Gastrocnemius medialis (tissue), 4 donors: ENCODE measurements at regions of chr13 and their contacts with region 1.

Region 1: GRCh38 chr13:24995226-24995804 is 100.6 kb upstream of the PABPC3 start:
- DNase-seq: peak; percentile 16 to 39
- ATAC-seq: peak; percentile 85 to 94
- H3K4me3 ChIP-seq: no peak overlapping the region
- H3K27ac ChIP-seq: no peak overlapping the region
- H3K4me1 ChIP-seq: no peaks in the 10 kb centered on the region
- H3K27me3 ChIP-seq: no peaks in the 10 kb centered on the region
- CTCF ChIP-seq: peak; percentile 25 to 68 (median 51)
- POLR2A ChIP-seq: no peak

Region 2: DNA sequence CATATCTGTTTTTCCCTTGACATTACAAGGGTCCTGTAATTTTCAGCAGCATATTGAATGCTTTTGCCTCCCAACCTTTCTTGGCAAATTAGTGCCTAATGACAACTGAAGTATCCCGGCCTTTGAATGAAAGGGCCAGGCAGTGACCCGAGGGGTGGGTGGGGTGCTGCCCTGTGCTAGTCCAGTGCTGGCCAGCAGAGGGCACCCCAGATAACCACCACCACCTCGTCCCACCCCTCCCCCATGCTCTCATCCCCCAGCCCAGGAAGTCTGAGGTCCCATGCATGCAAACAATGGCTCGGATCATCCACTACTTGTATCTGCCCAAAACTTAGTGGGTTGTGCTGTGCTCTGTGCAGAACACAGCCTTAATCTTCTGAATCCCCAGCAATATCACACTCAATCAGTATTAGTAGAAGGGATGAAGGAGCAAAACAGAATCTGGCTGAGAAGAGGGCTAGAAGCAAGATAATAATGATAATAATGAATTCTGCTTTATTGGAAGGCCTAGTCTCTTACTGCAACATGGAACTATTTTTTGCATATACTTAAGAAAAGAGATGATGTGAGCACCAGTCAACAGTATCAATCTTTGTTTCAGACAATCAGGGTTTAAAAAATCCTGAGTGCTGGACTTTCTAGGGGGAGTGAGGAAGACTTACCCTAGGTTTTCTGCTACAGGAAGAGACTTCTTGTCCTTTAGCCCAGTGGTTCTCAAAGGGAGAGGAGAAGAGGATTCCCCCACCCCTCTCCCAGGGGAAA is 311.3 kb before region 1 on chr13:
- in situ Hi-C with region 1: loop called in 2 of 4 experiments (anchors 25 kb)
- intact Hi-C with region 1: no loop called
- DNase-seq: peak in 1 of 2 donors; percentile 24
- ATAC-seq: peak; percentile 23 to 60
- H3K4me3 ChIP-seq: no peak overlapping the region
- H3K27ac ChIP-seq: no peak overlapping the region
- H3K4me1 ChIP-seq: no peaks in the 10 kb centered on the region
- H3K27me3 ChIP-seq: peaks cover 12 to 22% (median 22%) of the 10 kb centered on the region in 3 donors
- CTCF ChIP-seq: peak; percentile 29 to 72 (median 49)
- POLR2A ChIP-seq: no peak

Region 3: DNA sequence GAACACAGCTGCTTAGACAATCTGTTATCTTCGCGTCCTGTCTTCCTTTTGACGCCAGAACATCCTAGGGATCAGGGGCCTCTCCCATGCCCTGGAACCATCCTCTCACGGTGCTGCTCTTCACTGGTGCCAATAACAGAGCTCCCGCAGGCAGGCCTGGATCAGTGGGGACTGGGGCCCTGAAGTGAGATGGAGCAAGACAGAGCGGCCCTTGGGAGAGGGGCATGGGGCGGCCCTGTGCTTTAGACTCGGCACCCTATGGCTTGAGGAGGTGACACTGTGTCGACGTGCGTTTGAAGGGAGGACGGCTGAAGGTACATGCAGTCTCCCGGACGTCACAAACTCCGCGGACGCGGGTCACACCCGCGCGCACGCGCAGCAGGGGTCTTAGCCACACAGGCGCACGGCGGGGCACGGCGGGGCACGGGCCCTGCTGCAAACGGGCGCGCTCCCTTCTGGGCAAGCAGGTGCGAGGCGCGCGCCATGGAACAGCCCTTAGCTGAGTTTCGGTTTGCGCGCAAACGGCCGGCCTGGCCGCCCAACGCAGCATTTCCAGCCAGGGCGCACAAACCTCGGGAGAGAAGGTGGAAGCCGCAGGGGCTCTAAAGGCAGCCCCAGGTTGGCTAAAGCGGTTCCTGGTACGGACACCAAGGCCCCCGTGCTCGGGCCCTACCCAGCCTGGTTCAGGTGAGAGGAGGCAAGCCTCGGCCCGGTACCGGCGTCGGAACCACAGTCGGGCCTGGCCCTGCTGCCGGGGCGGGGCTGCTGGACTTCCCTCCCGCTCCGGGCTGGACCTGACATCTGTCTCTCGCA is 247.9 kb before region 1 on chr13:
- in situ Hi-C with region 1: no loop called
- intact Hi-C with region 1: no loop called
- DNase-seq: no peak
- ATAC-seq: no peak
- H3K4me3 ChIP-seq: peak overlapping the region; percentile 30 to 44 (median 39)
- H3K27ac ChIP-seq: no peak overlapping the region
- H3K4me1 ChIP-seq: peaks cover 0 to 7% of the 10 kb centered on the region in 2 donors
- H3K27me3 ChIP-seq: peaks cover 18 to 20% (median 20%) of the 10 kb centered on the region in 3 donors
- CTCF ChIP-seq: no peak
- POLR2A ChIP-seq: no peak

Region 4: GRCh38 chr13:25037057-25037813 is 41.9 kb after region 1 on chr13:
- in situ Hi-C with region 1: no loop called
- intact Hi-C with region 1: loop called (anchors 1 kb)
- DNase-seq: no peak
- ATAC-seq: no peak
- H3K4me3 ChIP-seq: no peak overlapping the region
- H3K27ac ChIP-seq: no peak overlapping the region
- H3K4me1 ChIP-seq: no peaks in the 10 kb centered on the region
- H3K27me3 ChIP-seq: peaks cover 0 to 2% (median 0%) of the 10 kb centered on the region in 3 donors
- CTCF ChIP-seq: peak; percentile 28 to 58 (median 41)
- POLR2A ChIP-seq: no peak

Region 5: GRCh38 chr13:25114220-25114619 is 118.9 kb after region 1 on chr13:
- in situ Hi-C with region 1: no loop called
- intact Hi-C with region 1: loop called (anchors 5 kb)
- DNase-seq: peak; percentile 13 to 49
- ATAC-seq: peak; percentile 60 to 77
- H3K4me3 ChIP-seq: no peak overlapping the region
- H3K27ac ChIP-seq: no peak overlapping the region
- H3K4me1 ChIP-seq: peaks cover 0 to 8% of the 10 kb centered on the region in 2 donors
- H3K27me3 ChIP-seq: no peaks in the 10 kb centered on the region
- CTCF ChIP-seq: peak in 4 of 5 experiments; percentile 12 to 61 (median 49)
- POLR2A ChIP-seq: no peak